Activated B cell treated with CpG ODN at 0.5 μM for 24 hours (primary cell): ENCODE measurements at regions of chr5 and their contacts with region 1.

Region 1: GRCh38 chr5:81751009-81751835 is at the start of gene SSBP2:
- DNase-seq: peak; percentile 99
- ATAC-seq: peak; percentile 84
- H3K4me3 Mint-ChIP-seq: peak within 1 kb of the TSS; percentile 95
- H3K27ac Mint-ChIP-seq: peak within 1 kb of the TSS; percentile 97
- H3K4me1 Mint-ChIP-seq: peaks cover 30% of the 10 kb centered on the region
- H3K27me3 Mint-ChIP-seq: no peaks in the 10 kb centered on the region
- CTCF ChIP-seq: no peak
- total RNA-seq, gene SSBP2: 26.2 and 26.4 TPM in 2 replicates

Region 2: DNA sequence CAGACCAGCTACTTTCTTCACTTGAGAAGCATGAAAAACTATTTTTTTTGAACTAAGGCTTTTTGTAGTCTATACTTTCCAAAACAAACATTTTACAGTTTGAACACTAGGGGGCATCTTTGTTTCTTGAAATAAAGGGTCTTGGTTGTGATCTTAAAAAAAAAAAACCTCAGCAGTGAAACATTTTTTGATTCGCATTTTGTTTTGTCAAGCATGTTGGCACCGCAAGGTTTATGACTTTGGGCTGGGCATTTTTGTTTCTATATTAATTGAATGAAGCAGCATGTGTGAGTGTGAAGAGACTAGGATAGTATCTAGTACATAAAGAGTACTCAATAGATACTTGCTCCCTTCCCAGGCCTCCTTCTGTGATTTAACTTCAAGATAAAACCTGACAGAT is 325.7 kb before region 1 on chr5:
- CTCF ChIA-PET with region 1: no interaction called
- POLR2A ChIA-PET with region 1: no interaction called
- intact Hi-C with region 1: loop called (anchors 5 kb)
- DNase-seq: no peak
- ATAC-seq: peak; percentile 50
- H3K4me3 Mint-ChIP-seq: no peak overlapping the region
- H3K27ac Mint-ChIP-seq: no peak overlapping the region
- H3K4me1 Mint-ChIP-seq: peaks cover 2% of the 10 kb centered on the region
- H3K27me3 Mint-ChIP-seq: no peaks in the 10 kb centered on the region
- CTCF ChIP-seq: peak; percentile 41

Region 3: DNA sequence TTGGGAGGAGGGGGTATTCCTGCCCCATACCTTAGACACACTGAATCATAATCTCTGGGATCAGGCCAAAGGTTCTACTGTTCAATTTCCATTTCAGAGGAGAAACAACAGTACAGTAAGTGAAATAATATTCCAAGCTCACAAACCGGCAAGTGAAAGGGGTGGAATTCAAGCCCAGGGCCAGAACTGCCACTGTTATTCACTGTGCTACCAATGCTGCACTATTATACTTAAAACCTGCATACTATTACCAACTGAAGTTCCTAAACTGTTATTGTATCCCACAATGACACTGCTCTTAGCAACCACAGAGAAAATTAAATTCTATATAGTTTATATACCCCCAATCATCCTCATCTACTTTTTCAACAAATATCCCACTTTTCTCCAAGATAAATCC is 24.9 kb before region 1 on chr5:
- CTCF ChIA-PET with region 1: no interaction called
- POLR2A ChIA-PET with region 1: no interaction called
- intact Hi-C with region 1: loop called (anchors 1 kb)
- DNase-seq: no peak
- ATAC-seq: no peak
- H3K4me3 Mint-ChIP-seq: no peak overlapping the region
- H3K27ac Mint-ChIP-seq: no peak overlapping the region
- H3K4me1 Mint-ChIP-seq: peaks cover 64% of the 10 kb centered on the region
- H3K27me3 Mint-ChIP-seq: no peaks in the 10 kb centered on the region
- CTCF ChIP-seq: no peak

Region 4: GRCh38 chr5:81851481-81852178 is 100.4 kb after region 1 on chr5:
- CTCF ChIA-PET with region 1: interaction called, 19 read pairs
- POLR2A ChIA-PET with region 1: interaction called, 285 read pairs
- intact Hi-C with region 1: loop called (anchors 1 kb)
- DNase-seq: peak; percentile 83
- ATAC-seq: peak; percentile 94
- H3K4me3 Mint-ChIP-seq: peak overlapping the region; percentile 93
- H3K27ac Mint-ChIP-seq: peak overlapping the region; percentile 94
- H3K4me1 Mint-ChIP-seq: peaks cover 35% of the 10 kb centered on the region
- H3K27me3 Mint-ChIP-seq: no peaks in the 10 kb centered on the region
- CTCF ChIP-seq: no peak

Region 5: GRCh38 chr5:82174128-82174918 is 423.1 kb after region 1 on chr5:
- CTCF ChIA-PET with region 1: no interaction called
- POLR2A ChIA-PET with region 1: no interaction called
- intact Hi-C with region 1: loop called (anchors 1 kb)
- DNase-seq: peak; percentile 46
- ATAC-seq: peak; percentile 89
- H3K4me3 Mint-ChIP-seq: peak overlapping the region; percentile 12
- H3K27ac Mint-ChIP-seq: peak overlapping the region; percentile 69
- H3K4me1 Mint-ChIP-seq: peaks cover 20% of the 10 kb centered on the region
- H3K27me3 Mint-ChIP-seq: no peaks in the 10 kb centered on the region
- CTCF ChIP-seq: no peak

Region 6: DNA sequence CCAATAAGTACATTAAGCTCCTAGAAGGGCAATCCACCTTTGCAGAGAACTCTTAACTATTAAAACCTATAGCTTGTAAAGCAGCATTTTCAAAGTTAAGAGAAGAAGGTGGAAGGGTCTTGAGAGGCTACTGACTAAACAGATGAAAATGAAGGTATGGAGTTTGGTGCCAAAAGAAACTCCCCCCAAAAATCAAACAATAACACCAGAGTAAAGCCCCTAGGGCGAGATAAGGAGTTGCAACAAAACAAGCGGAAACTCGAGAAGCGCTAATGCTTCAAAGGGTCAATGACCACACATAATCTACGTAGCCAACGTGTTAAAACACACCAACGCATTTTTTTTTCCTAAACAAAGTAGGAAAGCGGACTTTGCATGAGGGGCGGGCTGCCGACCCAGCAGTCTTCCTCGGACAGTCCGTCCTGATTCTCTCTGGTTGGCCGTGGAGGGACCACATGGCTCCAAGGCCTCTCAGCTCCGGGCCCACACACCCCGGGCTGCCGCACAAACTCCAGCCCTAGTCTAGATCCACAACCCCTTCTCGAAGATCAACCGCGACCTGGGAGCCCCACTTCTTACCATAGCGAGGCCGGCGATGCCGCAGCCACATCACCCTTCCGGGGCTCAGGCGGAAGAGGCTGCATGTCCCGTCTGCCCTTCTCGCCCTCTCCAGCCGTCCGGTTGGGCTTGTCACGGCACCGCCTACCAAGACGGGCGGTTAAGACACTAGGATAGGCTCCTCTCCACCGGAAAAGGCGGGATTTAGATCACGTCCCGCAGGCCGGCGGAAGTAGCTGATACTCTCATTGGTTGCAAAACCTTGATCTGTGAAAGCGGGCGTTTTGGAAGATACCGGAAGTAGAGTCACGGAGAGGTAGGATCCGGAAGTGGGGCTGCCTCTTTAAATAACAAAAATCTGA is 1325.8 kb after region 1 on chr5 and contains the starts of genes TMEM167A and XRCC4:
- CTCF ChIA-PET with region 1: no interaction called
- POLR2A ChIA-PET with region 1: interaction called, 4 read pairs
- intact Hi-C with region 1: loop called (anchors 10 kb)
- DNase-seq: peak; percentile 80
- ATAC-seq: peak; percentile 99
- H3K4me3 Mint-ChIP-seq: peak within 1 kb of the TSS; percentile 100
- H3K27ac Mint-ChIP-seq: peak within 1 kb of the TSS; percentile 99
- H3K4me1 Mint-ChIP-seq: peaks cover 40% of the 10 kb centered on the region
- H3K27me3 Mint-ChIP-seq: no peaks in the 10 kb centered on the region
- CTCF ChIP-seq: no peak
- total RNA-seq, gene TMEM167A: 45.1 and 50.3 TPM in 2 replicates
- total RNA-seq, gene XRCC4: 8.1 and 8.5 TPM in 2 replicates